Activated CD4-positive, alpha-beta memory T cell treated with anti-CD3 and anti-CD28 coated beads for 36 hours (primary cell): ENCODE measurements at regions of chr12 and their contacts with region 1.

Region 1: GRCh38 chr12:11836282-11837151 is 187.0 kb downstream of the ETV6 start:
- DNase-seq: peak; percentile 88
- H3K4me3 Mint-ChIP-seq: peak overlapping the region; percentile 54
- H3K27ac Mint-ChIP-seq: peak overlapping the region; percentile 98
- H3K4me1 Mint-ChIP-seq: peaks cover 85% of the 10 kb centered on the region
- H3K27me3 Mint-ChIP-seq: no peaks in the 10 kb centered on the region

Region 2: DNA sequence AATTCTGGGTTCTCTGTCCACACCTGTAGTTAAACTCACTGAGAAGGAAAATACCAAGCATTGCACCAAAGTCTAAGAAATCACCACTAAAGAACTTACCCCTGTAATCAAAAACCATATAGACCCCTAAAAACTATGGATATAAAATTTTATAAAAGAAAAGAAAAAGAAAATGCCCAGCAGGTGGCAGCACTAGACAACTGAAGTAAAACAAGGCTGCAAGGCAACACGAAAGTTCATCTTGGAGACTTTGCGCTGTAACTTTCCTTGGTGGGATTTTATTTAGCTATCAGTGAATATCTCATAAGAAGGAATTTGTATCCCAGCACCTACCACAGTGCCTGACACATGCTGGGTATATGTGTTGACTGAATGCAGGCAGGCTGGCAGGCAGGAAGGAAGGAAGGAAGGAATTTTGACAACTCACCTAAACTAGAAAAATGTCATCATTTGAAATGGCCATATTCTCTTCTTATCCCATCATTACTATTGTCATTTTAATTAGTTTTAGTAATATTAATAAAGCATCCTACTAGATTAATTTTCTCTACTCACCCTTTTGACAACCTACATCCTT is 255.2 kb before region 1 on chr12:
- CTCF ChIA-PET with region 1: interaction called, 19 read pairs
- POLR2A ChIA-PET with region 1: no interaction called
- intact Hi-C with region 1: no loop called
- DNase-seq: peak; percentile 63
- H3K4me3 Mint-ChIP-seq: no peak overlapping the region
- H3K27ac Mint-ChIP-seq: no peak overlapping the region
- H3K4me1 Mint-ChIP-seq: peaks cover 23% of the 10 kb centered on the region
- H3K27me3 Mint-ChIP-seq: peaks cover 2% of the 10 kb centered on the region

Region 3: DNA sequence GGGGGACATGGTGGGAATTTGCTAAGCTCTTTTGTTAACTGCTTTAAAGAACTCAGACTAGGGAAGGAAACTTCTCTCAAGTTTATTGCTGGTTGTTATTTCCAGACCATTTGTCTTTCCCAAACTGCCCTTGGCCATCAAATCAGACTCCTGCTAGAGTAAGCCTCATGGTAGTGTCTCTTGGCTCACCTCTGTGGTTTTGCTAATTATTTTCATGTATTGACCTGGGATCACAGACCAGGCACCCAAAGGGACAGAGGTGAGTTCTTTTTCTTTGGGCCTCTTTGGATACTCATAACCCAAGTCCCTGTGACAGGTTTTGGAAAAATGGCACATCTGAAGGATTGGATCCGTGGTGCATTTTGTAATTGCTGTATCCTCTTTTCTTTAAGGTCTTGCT is 175.9 kb before region 1 on chr12:
- CTCF ChIA-PET with region 1: no interaction called
- POLR2A ChIA-PET with region 1: no interaction called
- intact Hi-C with region 1: no loop called
- DNase-seq: no peak
- H3K4me3 Mint-ChIP-seq: no peak overlapping the region
- H3K27ac Mint-ChIP-seq: no peak overlapping the region
- H3K4me1 Mint-ChIP-seq: peaks cover 89% of the 10 kb centered on the region
- H3K27me3 Mint-ChIP-seq: no peaks in the 10 kb centered on the region

Region 4: GRCh38 chr12:11765817-11766794 is 70.4 kb before region 1 on chr12:
- CTCF ChIA-PET with region 1: no interaction called
- POLR2A ChIA-PET with region 1: interaction called, 5 read pairs
- intact Hi-C with region 1: loop called (anchors 1 kb)
- DNase-seq: peak; percentile 88
- H3K4me3 Mint-ChIP-seq: peak overlapping the region; percentile 28
- H3K27ac Mint-ChIP-seq: peak overlapping the region; percentile 84
- H3K4me1 Mint-ChIP-seq: peaks cover 99% of the 10 kb centered on the region
- H3K27me3 Mint-ChIP-seq: no peaks in the 10 kb centered on the region

Region 5: GRCh38 chr12:11812586-11813427 is 23.7 kb before region 1 on chr12:
- CTCF ChIA-PET with region 1: no interaction called
- POLR2A ChIA-PET with region 1: interaction called, 4 read pairs
- intact Hi-C with region 1: loop called (anchors 1 kb)
- DNase-seq: peak; percentile 41
- H3K4me3 Mint-ChIP-seq: peak overlapping the region; percentile 63
- H3K27ac Mint-ChIP-seq: peak overlapping the region; percentile 78
- H3K4me1 Mint-ChIP-seq: peaks cover 80% of the 10 kb centered on the region
- H3K27me3 Mint-ChIP-seq: no peaks in the 10 kb centered on the region

Region 6: DNA sequence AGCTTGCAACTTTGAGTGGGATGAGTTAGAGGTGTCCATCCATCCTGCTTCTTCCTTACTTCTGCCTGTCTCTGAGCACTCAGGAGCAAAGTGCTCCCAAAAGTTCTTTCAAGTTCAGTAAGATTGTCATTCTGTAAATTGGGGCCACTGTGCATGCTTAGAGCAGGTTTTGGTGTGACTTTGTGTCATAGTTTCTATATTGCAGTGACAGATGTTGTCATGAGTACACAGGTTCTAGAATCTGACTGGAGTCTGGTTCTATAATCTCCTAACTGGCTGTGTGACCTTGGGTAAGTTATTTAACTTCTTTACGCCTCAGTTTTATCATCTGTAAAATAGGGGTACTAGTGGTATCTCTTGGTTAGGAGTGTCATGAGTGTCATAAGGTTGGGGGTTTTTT is 31.5 kb after region 1 on chr12:
- CTCF ChIA-PET with region 1: no interaction called
- POLR2A ChIA-PET with region 1: no interaction called
- intact Hi-C with region 1: loop called (anchors 1 kb)
- DNase-seq: peak; percentile 25
- H3K4me3 Mint-ChIP-seq: no peak overlapping the region
- H3K27ac Mint-ChIP-seq: peak overlapping the region; percentile 70
- H3K4me1 Mint-ChIP-seq: peaks cover 51% of the 10 kb centered on the region
- H3K27me3 Mint-ChIP-seq: no peaks in the 10 kb centered on the region

Region 7: DNA sequence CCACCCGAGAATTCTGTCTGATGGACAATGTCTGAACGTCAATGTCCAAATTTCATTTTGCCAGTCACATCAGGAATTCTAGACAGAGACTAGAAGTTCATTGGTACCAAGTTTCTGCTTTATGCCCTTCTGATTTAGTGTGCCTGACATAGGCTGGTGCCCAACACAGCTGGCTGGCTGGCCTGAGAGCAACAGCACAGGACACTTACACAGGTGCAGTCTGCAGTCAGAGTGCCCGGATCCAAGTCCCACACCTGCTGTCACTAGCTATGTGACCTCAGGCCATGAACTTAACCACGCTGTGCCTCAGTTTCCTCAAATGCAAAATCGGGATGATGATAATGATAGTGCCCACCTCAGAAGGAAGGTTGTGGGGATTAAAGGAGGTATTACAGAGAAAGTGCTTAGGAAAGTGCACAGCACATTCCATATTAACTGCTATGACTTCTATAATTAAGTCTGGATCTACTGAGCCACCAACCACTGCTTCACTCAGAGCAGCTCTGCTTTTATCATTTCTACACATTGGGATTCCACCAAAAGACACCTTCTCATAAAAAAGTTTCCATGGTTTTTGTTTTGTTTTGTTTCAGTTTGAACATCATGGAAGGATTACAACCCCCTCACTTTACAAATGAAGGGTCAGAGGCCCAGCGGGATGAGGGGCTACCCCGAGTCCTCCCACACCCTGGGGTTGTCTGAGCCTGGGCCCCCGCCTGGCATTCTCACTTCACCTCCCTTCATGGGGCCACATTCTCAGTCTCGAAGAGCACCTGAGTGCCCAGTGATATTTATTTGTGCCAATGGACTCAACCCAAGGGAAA is 65.4 kb after region 1 on chr12:
- CTCF ChIA-PET with region 1: no interaction called
- POLR2A ChIA-PET with region 1: interaction called, 3 read pairs
- intact Hi-C with region 1: loop called (anchors 1 kb)
- DNase-seq: peak; percentile 81
- H3K4me3 Mint-ChIP-seq: peak overlapping the region; percentile 50
- H3K27ac Mint-ChIP-seq: peak overlapping the region; percentile 92
- H3K4me1 Mint-ChIP-seq: peaks cover 52% of the 10 kb centered on the region
- H3K27me3 Mint-ChIP-seq: no peaks in the 10 kb centered on the region

Region 8: DNA sequence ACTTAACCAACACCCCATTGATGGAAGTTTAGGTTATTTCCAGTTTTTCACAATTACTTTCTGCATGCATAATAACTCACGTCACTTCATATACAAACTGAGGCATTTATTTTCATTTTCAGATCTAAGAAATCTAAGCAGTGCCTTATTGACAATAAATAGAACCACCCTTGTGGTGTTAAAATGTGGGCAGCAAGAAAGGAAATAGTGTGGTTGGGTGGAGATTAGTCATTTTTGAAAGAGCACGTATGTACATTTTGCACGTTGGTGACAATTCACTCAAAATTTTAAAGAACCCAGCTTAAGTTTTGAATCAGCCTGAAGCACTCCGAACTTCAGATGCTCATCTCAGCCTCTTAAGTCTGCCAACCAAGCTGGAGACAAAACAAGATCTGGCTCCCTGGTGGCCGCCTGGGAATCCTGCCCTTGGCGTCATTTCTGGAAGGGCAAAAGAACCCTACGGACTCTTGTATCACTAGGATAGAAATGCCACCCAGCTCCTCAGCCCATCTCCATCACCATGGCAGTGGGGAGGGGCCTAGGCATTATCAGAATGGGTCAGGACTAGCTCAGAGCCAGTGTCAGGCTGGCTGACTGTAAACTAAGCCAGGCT is 144.7 kb after region 1 on chr12:
- CTCF ChIA-PET with region 1: no interaction called
- POLR2A ChIA-PET with region 1: interaction called, 6 read pairs
- intact Hi-C with region 1: loop called (anchors 1 kb)
- DNase-seq: peak; percentile 78
- H3K4me3 Mint-ChIP-seq: peak overlapping the region; percentile 36
- H3K27ac Mint-ChIP-seq: peak overlapping the region; percentile 99
- H3K4me1 Mint-ChIP-seq: peaks cover 68% of the 10 kb centered on the region
- H3K27me3 Mint-ChIP-seq: no peaks in the 10 kb centered on the region